Activated CD4-positive, alpha-beta T cell treated with anti-CD3 and anti-CD28 coated beads, Interleukin-2, amount 10 ng/mL, durations not matched to agents 24 days and 14 days (primary cell): ENCODE measurements at regions of chr16 and their contacts with region 1.

Region 1: GRCh38 chr16:29995911-29996772 is at the start of gene INO80E:
- DNase-seq: peak; percentile 100
- H3K4me3 Mint-ChIP-seq: peak within 1 kb of the TSS; percentile 95
- H3K27ac Mint-ChIP-seq: peak within 1 kb of the TSS; percentile 98
- H3K4me1 Mint-ChIP-seq: peaks cover 26% of the 10 kb centered on the region
- H3K27me3 Mint-ChIP-seq: no peaks in the 10 kb centered on the region
- total RNA-seq, gene INO80E: 129 and 133 TPM in 2 replicates

Region 2: DNA sequence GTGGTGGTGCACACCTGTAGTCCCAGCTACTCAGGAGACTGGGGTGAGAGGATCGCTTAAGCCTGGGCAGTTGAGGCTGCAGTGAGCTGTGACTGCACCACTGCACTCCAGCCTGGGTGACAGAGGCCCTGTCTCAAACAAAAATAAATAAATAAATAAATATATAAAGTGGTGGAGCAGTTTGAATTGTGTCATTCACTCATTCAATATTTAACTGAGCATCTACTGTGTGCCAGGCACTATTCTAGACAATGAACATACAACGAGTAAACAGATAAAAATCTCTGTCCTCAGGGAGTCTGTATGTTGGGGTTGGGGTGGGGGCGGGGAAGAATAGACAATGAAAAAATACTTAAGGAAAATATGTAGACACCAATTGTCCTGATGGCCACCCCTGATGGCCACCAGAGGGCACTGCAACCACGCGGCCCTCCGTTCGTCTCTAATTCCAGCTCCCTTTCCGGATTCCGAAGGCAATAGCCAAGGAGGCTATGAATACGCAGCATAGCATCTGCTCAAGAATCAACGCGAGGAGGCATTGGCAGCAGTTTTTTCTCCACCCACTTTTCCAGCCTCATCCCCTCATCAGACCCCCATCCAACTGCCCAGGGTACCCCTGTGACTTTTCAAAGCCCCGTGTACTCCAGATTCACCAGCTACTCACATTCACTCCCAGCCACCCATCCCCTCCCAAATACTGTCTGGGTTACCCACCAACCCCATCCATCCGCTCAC is 295.7 kb before region 1 on chr16:
- intact Hi-C with region 1: loop called (anchors 1 kb)
- DNase-seq: peak; percentile 92
- H3K4me3 Mint-ChIP-seq: peak overlapping the region; percentile 47
- H3K27ac Mint-ChIP-seq: peak overlapping the region; percentile 81
- H3K4me1 Mint-ChIP-seq: peaks cover 35% of the 10 kb centered on the region
- H3K27me3 Mint-ChIP-seq: no peaks in the 10 kb centered on the region

Region 3: GRCh38 chr16:29862884-29863668 is 133.1 kb before region 1 on chr16 and contains the start of gene CDIPT:
- intact Hi-C with region 1: loop called (anchors 1 kb)
- DNase-seq: peak; percentile 98
- H3K4me3 Mint-ChIP-seq: peak within 1 kb of the TSS; percentile 96
- H3K27ac Mint-ChIP-seq: peak within 1 kb of the TSS; percentile 98
- H3K4me1 Mint-ChIP-seq: peaks cover 25% of the 10 kb centered on the region
- H3K27me3 Mint-ChIP-seq: no peaks in the 10 kb centered on the region
- total RNA-seq, gene CDIPT: 69.2 and 71.2 TPM in 2 replicates

Region 4: GRCh38 chr16:29961479-29962343 is 34.4 kb before region 1 on chr16 and contains the start of gene TMEM219:
- intact Hi-C with region 1: loop called (anchors 1 kb)
- DNase-seq: peak; percentile 99
- H3K4me3 Mint-ChIP-seq: peak within 1 kb of the TSS; percentile 92
- H3K27ac Mint-ChIP-seq: peak within 1 kb of the TSS; percentile 87
- H3K4me1 Mint-ChIP-seq: peaks cover 15% of the 10 kb centered on the region
- H3K27me3 Mint-ChIP-seq: no peaks in the 10 kb centered on the region
- total RNA-seq, gene TMEM219: 41.7 and 43.8 TPM in 2 replicates

Region 5: GRCh38 chr16:30052671-30053372 is 56.7 kb after region 1 on chr16:
- intact Hi-C with region 1: loop called (anchors 2 kb)
- DNase-seq: peak; percentile 98
- H3K4me3 Mint-ChIP-seq: peak overlapping the region; percentile 87
- H3K27ac Mint-ChIP-seq: peak overlapping the region; percentile 81
- H3K4me1 Mint-ChIP-seq: peaks cover 31% of the 10 kb centered on the region
- H3K27me3 Mint-ChIP-seq: no peaks in the 10 kb centered on the region

Region 6: DNA sequence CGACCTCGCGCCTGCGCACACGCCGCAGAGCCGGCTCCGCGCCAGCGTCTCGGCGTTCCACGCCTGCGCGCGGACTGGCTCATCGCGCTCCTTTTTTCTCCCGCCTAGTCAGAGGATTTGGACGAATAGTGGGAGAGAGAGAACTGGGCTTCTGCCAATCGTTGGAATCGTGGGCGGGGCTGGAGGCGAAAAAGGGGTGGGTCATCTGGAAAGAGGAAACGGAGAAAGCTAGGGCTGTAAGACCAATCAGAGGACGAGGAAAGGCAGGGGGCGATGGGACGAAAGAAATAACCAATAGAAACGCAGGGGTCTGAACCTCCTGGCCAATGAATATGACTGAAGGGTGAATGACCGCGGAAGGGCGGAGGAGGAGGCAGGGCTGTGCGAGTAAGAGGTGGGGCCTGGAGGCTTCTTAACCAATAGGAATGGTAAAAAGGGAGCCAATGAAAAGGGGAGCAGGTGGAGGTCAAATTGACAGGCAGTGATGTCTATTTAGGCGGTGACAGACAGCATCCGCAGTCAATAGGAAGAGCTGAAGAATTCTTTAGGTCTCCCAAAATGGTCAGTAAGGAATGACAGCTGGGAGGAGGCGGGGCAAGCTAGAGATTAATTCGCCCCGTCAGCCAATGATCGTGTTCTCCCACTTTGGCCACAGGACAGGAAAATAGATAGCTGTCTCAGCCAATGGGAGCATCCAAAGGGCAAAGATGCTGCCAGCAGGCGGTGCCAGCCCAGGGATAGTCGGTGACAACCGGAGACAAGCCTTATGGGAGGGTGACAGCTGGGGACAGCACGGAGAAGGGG is 374.5 kb after region 1 on chr16 and contains the start of gene TBC1D10B:
- intact Hi-C with region 1: loop called (anchors 10 kb)
- DNase-seq: peak; percentile 100
- H3K4me3 Mint-ChIP-seq: peak within 1 kb of the TSS; percentile 90
- H3K27ac Mint-ChIP-seq: peak within 1 kb of the TSS; percentile 94
- H3K4me1 Mint-ChIP-seq: peaks cover 42% of the 10 kb centered on the region
- H3K27me3 Mint-ChIP-seq: peaks cover 4% of the 10 kb centered on the region
- total RNA-seq, gene TBC1D10B: 68.9 TPM in 2 replicates